ENCODE measurements at regions of chr2 and their contacts with region 1.

Region 1: DNA sequence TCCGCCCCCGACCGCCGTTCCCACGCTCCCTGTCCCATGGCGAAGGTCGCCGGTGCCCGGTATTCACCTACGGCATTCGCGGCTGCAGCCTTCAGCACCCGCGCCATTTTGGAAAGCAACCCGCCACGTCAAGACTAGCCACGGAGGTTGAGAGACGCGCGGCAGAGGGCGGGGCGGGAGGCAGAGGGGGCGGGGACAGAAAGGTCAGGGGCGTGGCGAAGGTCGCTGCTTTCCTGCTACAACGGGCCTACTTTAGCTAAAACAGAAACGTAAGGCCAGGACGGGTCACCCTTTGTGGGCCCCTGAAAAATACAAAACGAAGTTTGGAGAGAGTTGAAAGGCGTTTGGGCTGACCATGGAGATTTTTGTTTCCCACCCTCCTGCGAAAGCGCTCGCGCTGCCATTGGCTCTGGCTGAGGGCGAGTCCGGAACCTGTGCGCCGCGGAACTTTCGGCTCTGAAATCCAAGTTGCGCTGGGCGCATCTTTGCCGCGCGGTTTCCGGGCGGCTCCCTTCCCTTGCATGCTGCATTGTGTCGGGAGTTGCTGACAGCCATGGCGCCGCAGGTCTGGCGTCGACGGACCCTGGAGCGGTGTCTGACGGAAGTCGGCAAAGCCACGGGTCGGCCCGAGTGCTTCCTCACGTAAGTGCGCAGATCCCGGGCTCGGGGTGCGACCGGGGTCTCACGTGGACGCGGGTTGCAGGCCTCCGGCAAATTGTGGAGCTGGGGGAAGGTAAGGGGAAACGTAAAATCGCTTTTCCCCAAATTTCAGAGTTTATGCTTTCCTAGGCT is at the starts of genes MCEE and MPHOSPH10:
- DNase-seq: peak; percentile 89
- H3K4me3 Mint-ChIP-seq: no peak within 1 kb of the TSS
- H3K27ac Mint-ChIP-seq: peak within 1 kb of the TSS; percentile 69
- H3K4me1 Mint-ChIP-seq: peaks cover 11% of the 10 kb centered on the region
- H3K27me3 Mint-ChIP-seq: no peaks in the 10 kb centered on the region
- total RNA-seq, gene MCEE: 11.4 and 14.7 TPM in 2 replicates
- total RNA-seq, gene MPHOSPH10: 67.5 and 68.8 TPM in 2 replicates

Region 2: GRCh38 chr2:70994756-70995729 is 135.3 kb before region 1 on chr2 and contains the start of gene TEX261:
- intact Hi-C with region 1: loop called (anchors 1 kb)
- DNase-seq: peak; percentile 90
- H3K4me3 Mint-ChIP-seq: peak within 1 kb of the TSS; percentile 99
- H3K27ac Mint-ChIP-seq: peak within 1 kb of the TSS; percentile 92
- H3K4me1 Mint-ChIP-seq: peaks cover 45% of the 10 kb centered on the region
- H3K27me3 Mint-ChIP-seq: peaks cover 4% of the 10 kb centered on the region
- total RNA-seq, gene TEX261: 89.4 and 97.4 TPM in 2 replicates

Region 3: GRCh38 chr2:71068218-71069035 is 61.9 kb before region 1 on chr2 and contains the start of gene NAGK:
- intact Hi-C with region 1: loop called (anchors 1 kb)
- DNase-seq: peak; percentile 98
- H3K4me3 Mint-ChIP-seq: peak within 1 kb of the TSS; percentile 93
- H3K27ac Mint-ChIP-seq: peak within 1 kb of the TSS; percentile 97
- H3K4me1 Mint-ChIP-seq: peaks cover 55% of the 10 kb centered on the region
- H3K27me3 Mint-ChIP-seq: no peaks in the 10 kb centered on the region
- total RNA-seq, gene NAGK: 75.2 and 83.2 TPM in 2 replicates

Region 4: GRCh38 chr2:71276311-71277146 is 146.2 kb after region 1 on chr2:
- intact Hi-C with region 1: loop called (anchors 2 kb)
- DNase-seq: peak; percentile 88
- H3K4me3 Mint-ChIP-seq: peak overlapping the region; percentile 76
- H3K27ac Mint-ChIP-seq: no peak overlapping the region
- H3K4me1 Mint-ChIP-seq: peaks cover 8% of the 10 kb centered on the region
- H3K27me3 Mint-ChIP-seq: peaks cover 69% of the 10 kb centered on the region